B cell (primary cell): ENCODE measurements at regions of chr2 and their contacts with region 1.

Region 1: GRCh38 chr2:30711646-30712085 is 95.6 kb downstream of the CAPN13 start:
- DNase-seq: peak; percentile 90
- ATAC-seq: peak; percentile 96
- H3K4me3 ChIP-seq: no peak overlapping the region
- H3K4me3 Mint-ChIP-seq: no peak overlapping the region
- H3K27ac ChIP-seq: no peak overlapping the region
- H3K27ac Mint-ChIP-seq: no peak overlapping the region
- H3K4me1 ChIP-seq: peaks cover 0 to 9% of the 10 kb centered on the region in 2 donors
- H3K4me1 Mint-ChIP-seq: peaks cover 9% of the 10 kb centered on the region
- H3K27me3 ChIP-seq: no peaks in the 10 kb centered on the region
- H3K27me3 Mint-ChIP-seq: no peaks in the 10 kb centered on the region
- CTCF ChIP-seq: peak; percentile 100

Region 2: GRCh38 chr2:30146438-30147147 is 565.1 kb before region 1 on chr2 and contains the start of gene YPEL5:
- CTCF ChIA-PET with region 1: interaction called, 45 read pairs
- POLR2A ChIA-PET with region 1: interaction called, 12 read pairs
- intact Hi-C with region 1: no loop called
- DNase-seq: peak; percentile 100
- ATAC-seq: peak; percentile 81
- H3K4me3 ChIP-seq: peak within 1 kb of the TSS; percentile 87 to 98 (median 94)
- H3K4me3 Mint-ChIP-seq: peak within 1 kb of the TSS; percentile 90
- H3K27ac ChIP-seq: peak within 1 kb of the TSS; percentile 99
- H3K27ac Mint-ChIP-seq: peak within 1 kb of the TSS; percentile 100
- H3K4me1 ChIP-seq: peaks cover 38 to 46% of the 10 kb centered on the region in 2 donors
- H3K4me1 Mint-ChIP-seq: peaks cover 45% of the 10 kb centered on the region
- H3K27me3 ChIP-seq: no peaks in the 10 kb centered on the region
- H3K27me3 Mint-ChIP-seq: no peaks in the 10 kb centered on the region
- CTCF ChIP-seq: no peak
- total RNA-seq, gene YPEL5: 115 and 117 TPM in 2 replicates

Region 3: GRCh38 chr2:30208452-30208851 is 503.2 kb before region 1 on chr2:
- CTCF ChIA-PET with region 1: interaction called, 344 read pairs
- POLR2A ChIA-PET with region 1: no interaction called
- intact Hi-C with region 1: loop called (anchors 1 kb)
- DNase-seq: peak; percentile 67
- ATAC-seq: peak; percentile 62
- H3K4me3 ChIP-seq: no peak overlapping the region
- H3K4me3 Mint-ChIP-seq: no peak overlapping the region
- H3K27ac ChIP-seq: no peak overlapping the region
- H3K27ac Mint-ChIP-seq: peak overlapping the region; percentile 22
- H3K4me1 ChIP-seq: peaks cover 9 to 18% of the 10 kb centered on the region in 2 donors
- H3K4me1 Mint-ChIP-seq: peaks cover 16% of the 10 kb centered on the region
- H3K27me3 ChIP-seq: no peaks in the 10 kb centered on the region
- H3K27me3 Mint-ChIP-seq: no peaks in the 10 kb centered on the region
- CTCF ChIP-seq: peak; percentile 88

Region 4: DNA sequence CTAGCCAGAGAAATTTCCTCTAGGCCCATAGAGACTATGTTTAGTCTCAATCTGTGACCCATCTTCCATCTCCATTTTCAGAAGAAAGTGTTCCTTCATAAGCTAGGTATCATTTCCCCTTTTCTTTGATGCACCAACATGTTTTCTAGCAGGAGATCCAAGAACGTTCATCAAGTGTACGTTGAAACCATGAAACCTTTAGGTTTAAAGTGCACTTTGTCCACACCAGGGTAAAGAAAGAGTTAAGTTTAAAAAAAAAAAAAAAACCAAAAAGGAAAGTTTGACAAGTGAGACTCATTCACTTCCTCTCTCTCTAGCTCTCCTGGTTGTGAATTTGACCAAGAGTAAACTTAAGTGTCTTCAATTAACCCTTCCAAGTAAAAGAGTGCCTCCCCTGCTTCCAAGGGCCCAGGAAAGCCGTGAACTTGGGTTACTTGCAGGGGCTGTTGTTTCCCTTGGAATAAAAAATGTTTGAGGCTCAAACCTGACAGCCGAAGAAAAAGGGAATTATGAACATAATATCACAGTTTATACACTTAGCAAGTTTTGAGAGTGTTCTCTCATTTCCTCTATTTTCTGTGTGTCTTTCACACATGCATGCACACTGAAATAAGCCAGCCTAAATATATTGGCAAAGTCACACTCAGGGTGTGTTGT is 423.7 kb before region 1 on chr2:
- CTCF ChIA-PET with region 1: interaction called, 12 read pairs
- POLR2A ChIA-PET with region 1: no interaction called
- intact Hi-C with region 1: no loop called
- DNase-seq: peak; percentile 77
- ATAC-seq: peak; percentile 85
- H3K4me3 ChIP-seq: peak overlapping the region; percentile 19 to 69 (median 34)
- H3K4me3 Mint-ChIP-seq: peak overlapping the region; percentile 58
- H3K27ac ChIP-seq: peak overlapping the region; percentile 81 to 86
- H3K27ac Mint-ChIP-seq: peak overlapping the region; percentile 84
- H3K4me1 ChIP-seq: peaks cover 83 to 91% of the 10 kb centered on the region in 2 donors
- H3K4me1 Mint-ChIP-seq: peaks cover 82% of the 10 kb centered on the region
- H3K27me3 ChIP-seq: no peaks in the 10 kb centered on the region
- H3K27me3 Mint-ChIP-seq: no peaks in the 10 kb centered on the region
- CTCF ChIP-seq: no peak

Region 5: GRCh38 chr2:30721668-30722647 is 10.3 kb after region 1 on chr2:
- CTCF ChIA-PET with region 1: interaction called, 23 read pairs
- POLR2A ChIA-PET with region 1: no interaction called
- intact Hi-C with region 1: no loop called
- DNase-seq: no peak
- ATAC-seq: no peak
- H3K4me3 ChIP-seq: no peak overlapping the region
- H3K4me3 Mint-ChIP-seq: no peak overlapping the region
- H3K27ac ChIP-seq: no peak overlapping the region
- H3K27ac Mint-ChIP-seq: no peak overlapping the region
- H3K4me1 ChIP-seq: no peaks in the 10 kb centered on the region
- H3K4me1 Mint-ChIP-seq: no peaks in the 10 kb centered on the region
- H3K27me3 ChIP-seq: peaks cover 0 to 22% (median 11%) of the 10 kb centered on the region in 4 experiments
- H3K27me3 Mint-ChIP-seq: peaks cover 19% of the 10 kb centered on the region
- CTCF ChIP-seq: no peak

Region 6: GRCh38 chr2:31324000-31324633 is 612.5 kb after region 1 on chr2:
- CTCF ChIA-PET with region 1: interaction called, 260 read pairs
- POLR2A ChIA-PET with region 1: no interaction called
- intact Hi-C with region 1: loop called (anchors 5 kb)
- DNase-seq: peak; percentile 23
- ATAC-seq: peak; percentile 46
- H3K4me3 ChIP-seq: peak overlapping the region in 3 of 5 experiments; percentile 16 to 57 (median 27)
- H3K4me3 Mint-ChIP-seq: peak overlapping the region; percentile 53
- H3K27ac ChIP-seq: peak overlapping the region in 1 of 2 donors; percentile 4
- H3K27ac Mint-ChIP-seq: peak overlapping the region; percentile 57
- H3K4me1 ChIP-seq: peaks cover 17 to 19% of the 10 kb centered on the region in 2 donors
- H3K4me1 Mint-ChIP-seq: peaks cover 43% of the 10 kb centered on the region
- H3K27me3 ChIP-seq: no peaks in the 10 kb centered on the region
- H3K27me3 Mint-ChIP-seq: no peaks in the 10 kb centered on the region
- CTCF ChIP-seq: no peak